ENCODE measurements at regions of chr9 and their contacts with region 1.

Region 1: GRCh38 chr9:14768405-14769229 is 46.1 kb upstream of the CER1 start:
- H3K4me3 ChIP-seq: no peak overlapping the region
- H3K27ac ChIP-seq: no peak overlapping the region
- H3K4me1 ChIP-seq: no peaks in the 10 kb centered on the region
- CTCF ChIP-seq: no peak

Region 2: DNA sequence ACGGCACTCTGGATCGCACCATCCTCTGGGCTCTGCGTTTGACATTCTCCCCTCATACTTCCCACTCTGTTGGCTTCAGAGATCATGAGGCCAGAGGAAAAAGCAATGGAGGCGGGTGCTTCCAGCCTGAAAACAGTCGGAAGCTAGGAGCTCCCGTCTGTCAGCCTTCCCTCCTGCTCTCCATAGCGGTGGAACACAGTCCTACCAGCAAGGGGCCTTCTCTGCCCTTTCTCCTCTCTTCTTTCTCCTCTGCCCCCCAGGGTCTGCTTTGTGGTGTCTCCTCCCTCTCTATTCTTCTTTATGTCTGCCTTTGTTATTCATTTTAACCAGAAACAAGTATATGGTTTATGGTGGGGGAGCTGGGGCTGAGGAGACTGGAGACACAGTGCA is 302.2 kb before region 1 on chr9:
- CTCF ChIA-PET with region 1: interaction called, 68 read pairs
- POLR2A ChIA-PET with region 1: no interaction called
- H3K4me3 ChIP-seq: no peak overlapping the region
- H3K27ac ChIP-seq: no peak overlapping the region
- H3K4me1 ChIP-seq: no peaks in the 10 kb centered on the region
- CTCF ChIP-seq: no peak

Region 3: GRCh38 chr9:14616188-14616982 is 152.2 kb before region 1 on chr9:
- CTCF ChIA-PET with region 1: interaction called, 33 read pairs
- POLR2A ChIA-PET with region 1: no interaction called
- H3K4me3 ChIP-seq: no peak overlapping the region
- H3K27ac ChIP-seq: no peak overlapping the region
- H3K4me1 ChIP-seq: no peaks in the 10 kb centered on the region
- CTCF ChIP-seq: no peak

Region 4: GRCh38 chr9:14752271-14752670 is 16.3 kb before region 1 on chr9:
- CTCF ChIA-PET with region 1: interaction called, 12 read pairs
- POLR2A ChIA-PET with region 1: no interaction called
- H3K4me3 ChIP-seq: no peak overlapping the region
- H3K27ac ChIP-seq: no peak overlapping the region
- H3K4me1 ChIP-seq: no peaks in the 10 kb centered on the region
- CTCF ChIP-seq: no peak

Region 5: GRCh38 chr9:14779566-14780022 is 11.0 kb after region 1 on chr9:
- CTCF ChIA-PET with region 1: interaction called, 18 read pairs
- POLR2A ChIA-PET with region 1: no interaction called
- H3K4me3 ChIP-seq: no peak overlapping the region
- H3K27ac ChIP-seq: no peak overlapping the region
- H3K4me1 ChIP-seq: no peaks in the 10 kb centered on the region
- CTCF ChIP-seq: no peak

Region 6: DNA sequence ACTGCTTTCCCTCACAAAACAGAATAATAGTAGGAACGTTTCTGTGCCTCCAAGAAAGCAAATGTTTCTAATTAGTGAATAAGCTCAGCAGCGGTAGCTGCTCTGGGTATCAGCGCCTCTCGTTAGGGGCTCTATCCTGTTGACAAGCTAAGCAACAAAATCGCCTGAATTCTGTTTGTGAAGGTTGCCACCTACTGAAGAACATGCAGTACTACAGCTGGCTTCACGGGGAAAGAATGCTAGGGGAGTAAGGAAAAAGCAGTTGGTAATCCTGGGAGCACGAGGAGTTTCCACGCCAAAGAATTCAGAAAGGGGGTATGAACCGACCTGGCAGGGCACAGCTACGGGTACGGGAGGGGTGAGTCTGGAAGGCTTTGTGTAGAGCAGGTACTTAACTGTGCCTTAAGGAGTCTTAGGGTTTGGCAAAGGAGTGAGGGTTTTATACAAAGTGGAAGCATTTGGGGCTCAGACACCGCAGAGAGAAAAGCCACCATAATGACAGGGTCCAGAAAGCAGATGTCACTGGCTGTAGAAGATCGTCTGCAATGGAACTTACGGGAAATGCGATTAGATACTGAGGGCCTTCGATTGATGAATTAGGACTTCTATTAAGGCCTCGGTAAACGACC is 366.7 kb after region 1 on chr9:
- CTCF ChIA-PET with region 1: interaction called, 12 read pairs
- POLR2A ChIA-PET with region 1: no interaction called
- H3K4me3 ChIP-seq: no peak overlapping the region
- H3K27ac ChIP-seq: no peak overlapping the region
- H3K4me1 ChIP-seq: no peaks in the 10 kb centered on the region
- CTCF ChIP-seq: peak; percentile 52; the same call in 1 of the 2 replicates

Measured in HEK293 (cell line).